Tibial artery (tissue), 4 donors: ENCODE measurements at regions of chr14 and their contacts with region 1.

Region 1: DNA sequence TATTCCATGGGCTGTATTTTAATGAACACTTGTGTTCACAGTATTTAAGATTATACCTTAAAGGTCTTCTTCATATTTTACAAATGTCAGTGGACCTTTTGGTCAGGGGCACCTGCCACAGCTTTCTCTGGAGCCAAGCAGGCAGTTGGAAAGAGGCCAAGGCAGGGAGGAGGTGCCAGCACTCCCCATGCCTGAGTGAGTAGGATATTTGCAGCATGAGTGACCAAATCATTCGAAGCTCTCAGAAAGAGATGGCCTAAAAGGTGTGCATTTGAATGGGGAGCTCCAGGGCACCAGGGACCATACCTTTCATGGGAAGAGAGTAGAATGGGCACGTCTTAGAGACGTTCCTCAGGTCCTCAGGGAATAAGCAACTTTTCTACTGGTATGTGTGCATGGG is 121.6 kb downstream of the GPR135 start:
- DNase-seq: no peak
- H3K4me3 ChIP-seq: no peak overlapping the region
- H3K27ac ChIP-seq: peak overlapping the region in 1 of 2 donors; percentile 41
- H3K4me1 ChIP-seq: peaks cover 0 to 81% (median 29%) of the 10 kb centered on the region in 4 donors
- H3K27me3 ChIP-seq: no peaks in the 10 kb centered on the region
- CTCF ChIP-seq: no peak

Region 2: DNA sequence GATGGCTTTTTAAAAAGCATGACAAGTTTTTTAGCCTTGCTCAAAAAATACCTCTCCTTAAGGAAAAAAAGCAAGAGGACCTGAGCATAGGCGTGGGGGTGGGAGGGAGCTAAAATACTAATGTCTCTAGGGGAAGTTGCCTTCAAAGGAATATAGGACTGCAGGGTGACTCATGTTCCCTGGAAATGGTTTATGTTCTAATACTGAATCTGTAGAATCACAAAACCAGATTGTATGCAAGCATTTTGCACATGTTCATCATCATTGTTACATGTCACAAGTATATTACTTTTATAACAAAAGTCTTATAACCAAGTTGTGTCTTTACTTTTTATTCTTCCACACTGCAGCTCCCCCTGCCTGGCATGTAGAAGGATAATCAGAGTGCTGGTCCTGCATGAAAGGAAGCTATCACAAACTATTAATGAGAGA is 85.0 kb after region 1 on chr14:
- intact Hi-C with region 1: loop called (anchors 10 kb)
- DNase-seq: no peak
- H3K4me3 ChIP-seq: no peak overlapping the region
- H3K27ac ChIP-seq: peak overlapping the region; percentile 72
- H3K4me1 ChIP-seq: peaks cover 0 to 67% (median 23%) of the 10 kb centered on the region in 4 donors
- H3K27me3 ChIP-seq: no peaks in the 10 kb centered on the region
- CTCF ChIP-seq: peak; percentile 26 to 38